ENCODE measurements at regions of chr16 and their contacts with region 1.

Region 1: DNA sequence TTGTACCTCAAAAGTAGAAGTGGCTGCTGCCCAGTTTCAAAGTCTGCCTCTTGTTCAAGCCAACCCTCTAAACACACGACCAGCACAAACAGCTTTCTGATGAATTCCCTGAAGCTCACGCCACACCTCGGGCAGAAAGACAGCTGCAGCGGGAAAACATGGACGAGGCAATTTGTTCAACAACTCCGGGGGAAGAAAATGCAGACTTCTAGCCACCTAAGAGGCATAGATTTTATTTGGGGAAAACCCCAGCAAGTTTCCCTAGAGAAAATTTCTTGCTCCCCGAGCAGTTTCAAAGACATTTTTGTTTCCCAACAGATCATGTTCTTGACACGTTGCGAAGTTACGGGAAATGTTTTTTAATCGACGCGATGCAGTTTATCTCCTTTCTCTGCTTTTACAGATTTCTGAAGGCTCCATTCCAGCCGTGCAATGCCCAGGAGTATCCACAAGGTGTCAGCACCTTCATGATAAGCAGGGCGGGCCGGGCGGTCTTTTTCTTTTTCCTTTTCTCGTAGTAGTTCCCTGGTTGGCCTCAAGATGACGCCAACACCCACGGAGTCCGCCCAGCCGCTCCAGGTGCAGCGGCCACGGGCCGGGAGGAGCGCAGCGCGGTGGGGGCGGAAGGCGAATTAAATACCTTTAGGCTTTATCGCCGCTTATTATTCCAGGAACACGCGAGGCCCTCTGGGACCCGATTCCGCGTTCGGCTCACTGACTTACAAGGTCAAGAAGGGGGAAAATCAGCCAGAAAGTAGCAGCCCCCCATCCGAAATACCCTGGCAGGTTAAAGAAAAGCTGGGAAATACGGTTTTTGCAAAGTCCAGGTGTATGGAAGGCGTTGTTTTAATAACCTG is 2.9 kb upstream of the FOXC2 start:
- DNase-seq: peak; percentile 81 to 96 (median 85)
- ATAC-seq: peak; percentile 100
- H3K4me3 ChIP-seq: no peak overlapping the region
- H3K4me1 ChIP-seq: peaks cover 10% of the 10 kb centered on the region
- CTCF ChIP-seq: peak; percentile 100

Region 2: DNA sequence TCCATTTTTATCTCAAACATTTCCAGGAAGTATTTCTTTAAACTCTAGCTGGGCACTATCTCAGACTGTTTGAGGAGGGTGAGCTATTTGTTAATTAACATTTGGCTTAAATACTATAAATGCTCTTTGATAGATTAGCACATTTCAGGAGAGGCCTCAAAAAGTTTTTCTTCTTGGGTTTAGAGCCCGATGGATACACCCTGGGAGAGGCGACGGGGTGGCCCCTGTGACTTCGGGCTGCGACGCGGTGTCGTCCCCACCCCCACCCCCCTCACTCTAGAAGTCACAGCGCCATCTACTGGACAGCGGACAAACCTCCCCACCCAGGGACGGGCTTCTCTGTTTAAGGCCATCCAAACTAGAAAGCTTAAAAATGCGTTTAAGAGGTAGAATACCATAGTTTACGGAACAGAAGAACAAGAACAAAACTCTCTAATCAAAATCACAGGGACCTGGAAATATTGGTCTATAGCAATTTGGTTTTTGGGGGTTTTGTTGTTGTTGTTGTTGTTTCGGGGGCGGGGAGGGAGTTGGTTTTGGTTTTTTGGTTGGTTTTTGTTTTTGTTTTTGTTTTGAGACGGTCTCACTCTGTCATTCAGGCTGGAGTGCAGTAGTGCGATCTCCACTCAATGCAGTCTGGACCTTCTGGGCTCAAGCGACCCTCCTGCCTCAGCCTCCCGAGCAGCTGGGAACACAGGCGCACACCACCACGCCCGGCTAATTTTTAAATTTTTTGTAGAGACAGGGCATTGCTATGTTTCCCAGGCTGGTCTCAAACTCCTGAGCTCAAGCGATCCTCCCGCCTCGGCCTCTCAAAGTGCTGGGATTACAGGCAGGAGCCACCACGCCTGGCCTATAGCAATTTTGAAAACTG is 499.1 kb after region 1 on chr16:
- intact Hi-C with region 1: loop called (anchors 5 kb)
- DNase-seq: peak in 2 of 3 donors; percentile 53 to 71
- ATAC-seq: peak; percentile 71
- H3K4me3 ChIP-seq: no peak overlapping the region
- H3K4me1 ChIP-seq: no peaks in the 10 kb centered on the region
- CTCF ChIP-seq: peak; percentile 43

Region 3: DNA sequence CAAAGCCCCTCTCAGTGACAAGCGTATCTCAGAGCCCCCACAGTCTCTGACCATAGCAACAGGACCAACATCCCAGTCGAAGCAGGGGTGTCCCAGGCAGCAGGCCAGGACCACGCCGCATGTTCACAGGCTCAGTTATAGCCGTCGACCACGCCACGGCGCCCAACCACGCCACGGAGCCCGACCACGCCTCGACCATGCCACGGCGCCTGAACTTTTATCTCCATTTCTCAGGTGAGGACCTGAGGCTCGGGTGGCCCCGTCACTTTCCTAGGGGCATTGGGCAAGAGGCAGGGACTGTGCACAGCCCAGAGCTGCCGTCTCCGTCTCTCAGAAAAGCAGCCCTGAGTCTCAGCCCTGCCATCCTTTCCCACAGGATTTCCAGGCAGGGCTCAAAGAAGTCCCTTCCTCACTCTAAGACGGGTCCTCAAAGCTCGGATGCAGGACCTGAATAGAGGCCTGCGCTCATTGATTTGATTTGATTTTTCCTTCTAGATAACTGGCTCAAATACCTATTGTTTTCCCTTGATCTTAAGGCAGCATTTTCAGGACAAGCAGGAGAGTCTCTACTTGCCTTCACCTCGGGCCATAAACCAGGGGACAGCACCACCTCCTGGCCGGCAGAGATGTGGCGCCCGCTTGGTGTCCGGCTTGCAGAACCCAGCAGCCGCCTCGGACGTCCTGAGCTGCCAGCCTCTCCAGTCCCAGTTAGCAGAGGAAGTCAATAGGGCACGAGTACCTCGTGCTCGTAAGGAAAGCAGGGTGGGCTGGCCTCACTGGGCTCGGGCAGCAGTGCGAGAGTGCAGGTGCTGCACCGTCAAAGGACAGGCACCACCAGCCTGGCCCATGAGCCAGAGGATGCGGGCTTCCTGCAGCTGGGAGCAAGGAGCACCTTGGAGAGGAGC is 714.7 kb after region 1 on chr16:
- intact Hi-C with region 1: loop called in 1 of 2 experiments (anchors 5 kb)
- DNase-seq: peak; percentile 72 to 82 (median 81)
- ATAC-seq: peak; percentile 96
- H3K4me3 ChIP-seq: no peak overlapping the region
- H3K4me1 ChIP-seq: peaks cover 7% of the 10 kb centered on the region
- CTCF ChIP-seq: peak; percentile 69